Mammary epithelial cell (primary cell): ENCODE measurements at regions of chr3 and their contacts with region 1.

Region 1: DNA sequence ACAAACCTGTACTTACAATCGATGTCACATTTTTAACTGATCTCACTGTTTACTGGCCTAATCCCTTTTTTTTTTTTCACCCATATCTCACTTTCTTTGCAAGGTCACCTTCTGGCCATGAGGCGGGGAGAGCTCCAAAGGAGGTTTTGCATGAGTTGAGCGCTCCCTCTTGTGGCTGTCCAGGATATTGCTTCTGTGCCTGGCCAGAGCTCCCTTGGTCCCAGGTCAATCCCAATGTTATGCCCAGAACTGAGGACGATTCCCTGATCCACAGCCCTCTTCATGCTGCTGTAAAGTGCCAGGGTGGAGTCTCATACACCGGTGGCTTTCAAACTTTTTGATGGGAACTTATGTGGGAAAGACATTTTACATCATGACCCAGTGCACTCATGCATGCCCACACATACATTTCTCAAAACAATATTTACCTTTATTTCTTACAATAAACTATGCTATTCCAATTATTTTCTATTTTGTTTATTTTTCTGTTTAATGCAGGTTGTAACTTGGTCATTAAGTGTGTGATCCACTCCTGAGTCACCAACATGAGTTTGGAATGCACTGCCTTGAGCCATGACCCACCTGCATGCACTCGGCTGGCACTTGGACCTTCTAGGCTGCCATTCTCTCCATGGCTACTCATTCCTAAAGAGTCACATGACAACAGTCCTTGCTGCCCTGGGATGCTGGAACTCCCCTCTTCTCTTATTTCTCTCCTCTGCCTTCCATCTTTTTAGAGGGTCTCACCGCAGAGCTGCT is 9.6 kb upstream of the SST start:
- DNase-seq: peak; percentile 48
- H3K4me3 ChIP-seq: no peak overlapping the region
- H3K27ac ChIP-seq: no peak overlapping the region
- H3K4me1 ChIP-seq: peaks cover 5% of the 10 kb centered on the region
- H3K27me3 ChIP-seq: peaks cover 14% of the 10 kb centered on the region
- CTCF ChIP-seq: peak; percentile 86 to 95

Region 2: DNA sequence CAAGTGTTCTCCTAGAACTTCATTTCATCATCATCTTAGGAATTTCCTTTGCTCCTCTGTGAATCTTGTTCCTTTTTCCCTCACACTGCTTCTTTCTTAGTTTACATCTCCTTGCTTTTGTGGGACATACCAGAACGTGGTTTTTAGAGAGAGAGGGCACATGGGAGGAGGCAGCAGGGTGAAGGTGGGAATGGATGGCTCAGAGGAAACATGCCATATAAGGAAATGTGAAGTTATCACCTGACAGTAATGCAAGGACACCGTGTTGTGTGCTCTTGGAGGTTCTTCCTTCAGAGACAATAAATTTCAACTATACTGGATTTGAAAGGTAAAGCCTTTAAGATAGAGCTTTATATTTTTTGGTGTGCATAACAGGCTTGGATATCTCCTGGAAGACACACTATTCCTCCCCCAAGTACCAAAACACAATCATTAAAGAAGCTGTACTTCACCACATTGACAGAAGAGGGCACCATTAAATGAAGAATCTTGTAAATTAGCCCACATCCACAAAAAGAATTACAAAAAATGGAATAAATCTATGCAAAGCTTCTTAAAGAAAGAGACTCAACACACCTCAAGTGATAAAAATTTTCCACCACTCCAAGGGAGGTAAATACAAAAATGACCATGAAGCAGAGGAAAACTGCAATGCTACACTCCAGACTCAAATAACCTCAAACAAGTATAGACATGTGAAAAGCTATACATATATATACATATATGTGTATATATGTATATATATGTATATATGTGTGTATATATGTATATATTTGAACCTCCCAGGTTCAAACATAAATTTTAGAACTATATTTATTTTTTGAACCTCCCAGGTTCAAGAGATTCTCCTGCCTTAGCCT is 566.7 kb before region 1 on chr3:
- CTCF ChIA-PET with region 1: no interaction called
- dilution Hi-C with region 1: no loop called
- in situ Hi-C with region 1: no loop called
- intact Hi-C with region 1: loop called (anchors 1 kb)
- DNase-seq: peak; percentile 24
- H3K4me3 ChIP-seq: no peak overlapping the region
- H3K27ac ChIP-seq: no peak overlapping the region
- H3K4me1 ChIP-seq: peaks cover 7% of the 10 kb centered on the region
- H3K27me3 ChIP-seq: no peaks in the 10 kb centered on the region
- CTCF ChIP-seq: peak; percentile 48 to 54

Region 3: GRCh38 chr3:187227658-187228258 is 452.1 kb before region 1 on chr3:
- CTCF ChIA-PET with region 1: no interaction called
- dilution Hi-C with region 1: no loop called
- in situ Hi-C with region 1: loop called in 1 of 2 experiments (anchors 10 kb)
- intact Hi-C with region 1: no loop called
- DNase-seq: peak; percentile 40
- H3K4me3 ChIP-seq: no peak overlapping the region
- H3K27ac ChIP-seq: no peak overlapping the region
- H3K4me1 ChIP-seq: no peaks in the 10 kb centered on the region
- H3K27me3 ChIP-seq: no peaks in the 10 kb centered on the region
- CTCF ChIP-seq: no peak

Region 4: GRCh38 chr3:187533797-187534196 is 146.0 kb before region 1 on chr3:
- CTCF ChIA-PET with region 1: no interaction called
- dilution Hi-C with region 1: no loop called
- in situ Hi-C with region 1: no loop called
- intact Hi-C with region 1: no loop called
- DNase-seq: no peak
- H3K4me3 ChIP-seq: no peak overlapping the region
- H3K27ac ChIP-seq: no peak overlapping the region
- H3K4me1 ChIP-seq: no peaks in the 10 kb centered on the region
- H3K27me3 ChIP-seq: no peaks in the 10 kb centered on the region
- CTCF ChIP-seq: no peak

Region 5: DNA sequence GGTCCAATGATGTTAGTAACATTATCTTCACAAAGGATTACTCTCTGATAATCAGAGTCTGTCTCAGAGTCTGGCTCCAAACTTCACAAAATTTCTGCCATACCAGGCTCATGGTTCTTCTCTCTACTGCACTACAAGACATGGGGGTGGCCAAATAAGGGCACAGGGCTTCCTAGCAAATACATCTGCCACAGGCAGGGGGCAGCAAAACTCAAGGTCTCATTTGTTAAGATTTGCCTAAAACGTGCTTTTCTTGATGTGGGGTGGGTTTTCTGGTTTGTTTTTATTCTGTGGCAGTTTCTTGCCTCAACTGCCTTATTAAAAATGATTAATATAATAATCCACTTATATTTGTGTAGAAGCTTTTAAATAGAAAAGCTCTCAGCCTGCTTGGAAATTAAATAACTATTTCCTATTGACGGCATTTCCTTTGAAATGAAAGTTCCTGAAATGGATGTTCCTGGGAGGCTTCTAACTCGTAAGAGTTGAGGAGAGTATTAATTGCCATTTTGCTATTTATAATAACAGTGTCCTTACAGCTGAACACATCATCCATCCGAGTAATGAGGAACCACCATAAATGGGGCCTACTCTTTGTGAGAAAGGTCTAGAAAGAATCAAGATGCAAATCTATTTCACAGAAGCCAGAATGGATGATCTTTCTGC is 63.4 kb before region 1 on chr3:
- CTCF ChIA-PET with region 1: no interaction called
- dilution Hi-C with region 1: no loop called
- in situ Hi-C with region 1: no loop called
- intact Hi-C with region 1: loop called (anchors 1 kb)
- DNase-seq: peak; percentile 23
- H3K4me3 ChIP-seq: no peak overlapping the region
- H3K27ac ChIP-seq: no peak overlapping the region
- H3K4me1 ChIP-seq: no peaks in the 10 kb centered on the region
- H3K27me3 ChIP-seq: no peaks in the 10 kb centered on the region
- CTCF ChIP-seq: peak; percentile 81 to 90